OCI-LY7 (cell line): ENCODE measurements at regions of chr12 and their contacts with region 1.

Region 1: GRCh38 chr12:40107098-40107802 is 1.4 kb upstream of the SLC2A13 start:
- DNase-seq: peak; percentile 91
- H3K4me3 ChIP-seq: peak overlapping the region; percentile 96
- H3K27ac ChIP-seq: no peak overlapping the region
- H3K4me1 ChIP-seq: peaks cover 39% of the 10 kb centered on the region
- CTCF ChIP-seq: peak; percentile 98

Region 2: DNA sequence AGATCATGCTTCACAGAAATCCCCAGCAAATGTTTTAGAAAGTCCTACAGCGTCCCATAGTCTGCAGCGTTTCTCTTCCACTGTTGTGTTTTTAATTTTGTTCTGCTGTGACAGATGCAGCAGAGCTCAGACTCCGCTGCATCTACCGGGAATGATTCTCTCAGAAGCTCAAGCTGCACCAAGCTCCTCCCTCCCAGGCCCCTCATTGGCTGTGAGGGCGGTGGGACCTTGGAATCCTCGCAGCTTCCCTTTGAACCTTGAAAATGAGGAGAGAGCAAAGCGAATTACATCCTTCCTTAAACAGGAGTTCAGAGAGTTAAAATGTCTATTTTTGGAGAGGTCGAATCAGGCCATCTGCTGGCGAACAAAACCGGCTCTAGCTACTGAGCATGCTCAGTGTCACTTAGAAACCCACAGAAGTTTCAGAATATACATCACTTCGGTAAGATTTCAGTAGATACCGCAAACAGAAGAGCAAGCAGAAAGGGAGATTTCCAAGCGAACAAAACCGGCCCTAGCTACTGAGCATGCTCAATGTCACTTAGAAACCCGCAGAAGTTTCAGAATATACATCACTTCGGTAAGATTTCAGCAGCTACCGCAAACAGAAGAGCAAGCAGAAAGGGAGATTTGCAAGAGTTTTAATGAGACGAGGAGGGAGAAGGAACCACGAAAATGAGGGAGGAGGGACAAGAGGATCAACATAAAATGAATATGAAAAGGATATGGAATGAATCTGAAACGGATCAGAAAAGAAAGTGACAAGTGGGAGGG is 487.4 kb before region 1 on chr12 and contains the start of gene ABCD2:
- CTCF ChIA-PET with region 1: no interaction called
- POLR2A ChIA-PET with region 1: interaction called, 4 read pairs
- intact Hi-C with region 1: loop called (anchors 5 kb)
- DNase-seq: peak; percentile 87
- H3K4me3 ChIP-seq: peak within 1 kb of the TSS; percentile 74
- H3K27ac ChIP-seq: peak within 1 kb of the TSS; percentile 87
- H3K4me1 ChIP-seq: peaks cover 51% of the 10 kb centered on the region
- CTCF ChIP-seq: peak; percentile 55
- total RNA-seq, gene ABCD2: 1.2 and 1.5 TPM in 2 replicates

Region 3: DNA sequence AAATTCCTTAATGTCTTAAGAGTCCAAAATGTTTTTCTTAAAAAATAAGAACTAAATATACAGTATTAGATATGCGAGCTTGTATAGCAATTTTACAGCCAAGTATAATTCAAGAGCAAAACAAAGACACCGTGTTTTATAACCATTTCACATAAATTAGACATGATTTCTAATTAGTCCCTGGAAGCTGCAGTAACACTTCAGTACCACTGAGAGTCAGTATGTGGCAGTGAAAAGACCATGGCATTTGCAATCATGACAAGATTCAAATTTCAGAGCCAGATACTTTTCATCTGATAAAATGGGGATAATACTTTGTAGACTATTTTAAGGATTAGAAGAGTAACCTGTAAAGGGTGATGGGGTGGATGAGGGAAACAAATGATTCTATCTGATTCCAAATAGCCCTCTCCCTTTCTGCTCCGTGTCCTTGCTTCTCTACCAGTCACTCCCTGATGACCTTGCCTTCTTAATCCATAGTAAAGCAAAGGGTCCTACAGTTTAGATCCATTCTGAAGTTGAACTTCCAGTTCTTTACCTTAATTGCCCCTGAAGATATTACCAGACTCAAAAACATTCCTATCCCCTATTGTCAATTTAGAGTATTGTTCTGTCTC is 342.2 kb before region 1 on chr12:
- CTCF ChIA-PET with region 1: interaction called, 3 read pairs
- POLR2A ChIA-PET with region 1: no interaction called
- intact Hi-C with region 1: loop called (anchors 1 kb)
- DNase-seq: peak; percentile 41
- H3K4me3 ChIP-seq: no peak overlapping the region
- H3K27ac ChIP-seq: no peak overlapping the region
- H3K4me1 ChIP-seq: no peaks in the 10 kb centered on the region
- CTCF ChIP-seq: peak; percentile 85

Region 4: GRCh38 chr12:40010899-40011774 is 96.1 kb before region 1 on chr12:
- CTCF ChIA-PET with region 1: interaction called, 7 read pairs
- POLR2A ChIA-PET with region 1: interaction called, 24 read pairs
- intact Hi-C with region 1: loop called (anchors 1 kb)
- DNase-seq: peak; percentile 86
- H3K4me3 ChIP-seq: peak overlapping the region; percentile 41
- H3K27ac ChIP-seq: no peak overlapping the region
- H3K4me1 ChIP-seq: peaks cover 6% of the 10 kb centered on the region
- CTCF ChIP-seq: peak; percentile 98

Region 5: GRCh38 chr12:40045656-40046055 is 61.6 kb before region 1 on chr12:
- CTCF ChIA-PET with region 1: no interaction called
- POLR2A ChIA-PET with region 1: interaction called, 16 read pairs
- intact Hi-C with region 1: loop called (anchors 2 kb)
- DNase-seq: no peak
- H3K4me3 ChIP-seq: no peak overlapping the region
- H3K27ac ChIP-seq: no peak overlapping the region
- H3K4me1 ChIP-seq: peaks cover 51% of the 10 kb centered on the region
- CTCF ChIP-seq: no peak

Region 6: DNA sequence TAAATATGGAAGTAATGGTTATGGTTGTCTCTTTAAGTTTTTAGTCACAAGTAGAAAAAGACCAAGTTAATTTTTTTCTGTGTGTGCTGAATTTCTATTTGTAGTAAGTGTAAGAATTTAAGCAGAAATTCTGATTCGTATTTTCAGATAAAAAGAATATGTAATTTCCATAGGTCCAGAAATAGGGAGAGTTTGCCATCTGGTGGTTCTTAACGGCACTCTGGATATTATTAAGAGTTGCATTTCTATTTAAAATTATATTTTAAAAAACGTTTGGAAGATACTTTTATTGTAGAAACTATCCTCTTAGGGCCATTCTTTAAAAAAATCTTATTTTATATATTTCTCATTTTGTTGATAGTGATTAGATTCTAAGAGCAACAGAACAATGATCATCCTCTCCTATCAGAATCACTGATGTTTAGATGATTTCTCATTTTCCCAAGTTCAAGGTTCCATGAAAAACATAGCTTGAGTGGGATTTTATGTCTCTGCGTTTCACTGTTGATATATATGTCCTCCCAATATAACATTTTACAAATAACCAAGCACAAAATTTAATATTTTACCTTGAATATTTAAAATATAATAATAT is 205.8 kb after region 1 on chr12:
- CTCF ChIA-PET with region 1: no interaction called
- POLR2A ChIA-PET with region 1: interaction called, 4 read pairs
- intact Hi-C with region 1: loop called (anchors 2 kb)
- DNase-seq: peak; percentile 54
- H3K4me3 ChIP-seq: no peak overlapping the region
- H3K27ac ChIP-seq: peak overlapping the region; percentile 35
- H3K4me1 ChIP-seq: peaks cover 36% of the 10 kb centered on the region
- CTCF ChIP-seq: peak; percentile 97